GM10248 (cell line): ENCODE measurements at regions of chr9 and their contacts with region 1.

Region 1: GRCh38 chr9:133184962-133185361 is 21.2 kb upstream of the GBGT1 start:
- DNase-seq: peak; percentile 39
- CTCF ChIP-seq: peak; percentile 30

Region 2: DNA sequence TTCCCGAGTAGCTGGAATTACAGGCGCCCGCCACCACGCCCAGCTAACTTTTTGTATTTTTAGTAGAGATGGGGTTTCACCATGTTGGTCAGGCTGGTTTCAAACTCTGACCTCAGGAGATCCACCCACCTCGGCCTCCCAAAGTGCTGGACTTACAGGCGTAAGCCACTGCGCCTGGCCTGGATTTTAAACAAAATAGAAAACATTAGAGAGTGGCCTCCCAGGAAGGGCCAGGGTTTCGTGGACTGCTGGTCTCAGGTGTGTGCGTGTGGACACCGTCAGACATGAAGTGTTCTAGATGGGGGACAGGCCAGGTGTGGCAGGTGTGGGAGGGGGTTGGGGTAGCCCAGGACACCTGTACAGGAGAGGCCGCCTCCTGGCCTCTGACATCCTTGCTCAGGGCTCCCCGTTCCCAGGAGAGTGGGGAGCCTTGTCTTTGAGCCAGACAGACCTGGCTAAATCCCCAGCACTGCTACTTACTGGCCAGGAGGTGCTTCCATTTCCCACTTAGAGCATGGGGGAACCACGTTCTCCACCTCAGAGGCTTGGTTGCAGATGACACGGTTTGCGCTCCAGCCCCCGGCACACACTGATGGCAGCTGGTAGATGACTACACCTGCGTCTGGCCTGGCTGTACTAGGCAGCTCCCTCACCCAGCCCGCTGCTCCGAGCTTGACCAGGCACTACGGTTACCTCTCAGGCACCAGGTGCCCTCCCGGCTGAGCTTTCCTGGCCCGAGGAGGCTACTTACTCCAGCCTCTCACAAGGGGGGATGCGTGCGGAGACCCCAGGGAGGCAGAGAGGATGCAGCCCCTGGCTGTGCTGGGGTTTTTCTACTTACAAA is 14.0 kb before region 1 on chr9:
- CTCF ChIA-PET with region 1: interaction called, 81 read pairs
- POLR2A ChIA-PET with region 1: no interaction called
- DNase-seq: peak; percentile 19
- CTCF ChIP-seq: no peak

Region 3: DNA sequence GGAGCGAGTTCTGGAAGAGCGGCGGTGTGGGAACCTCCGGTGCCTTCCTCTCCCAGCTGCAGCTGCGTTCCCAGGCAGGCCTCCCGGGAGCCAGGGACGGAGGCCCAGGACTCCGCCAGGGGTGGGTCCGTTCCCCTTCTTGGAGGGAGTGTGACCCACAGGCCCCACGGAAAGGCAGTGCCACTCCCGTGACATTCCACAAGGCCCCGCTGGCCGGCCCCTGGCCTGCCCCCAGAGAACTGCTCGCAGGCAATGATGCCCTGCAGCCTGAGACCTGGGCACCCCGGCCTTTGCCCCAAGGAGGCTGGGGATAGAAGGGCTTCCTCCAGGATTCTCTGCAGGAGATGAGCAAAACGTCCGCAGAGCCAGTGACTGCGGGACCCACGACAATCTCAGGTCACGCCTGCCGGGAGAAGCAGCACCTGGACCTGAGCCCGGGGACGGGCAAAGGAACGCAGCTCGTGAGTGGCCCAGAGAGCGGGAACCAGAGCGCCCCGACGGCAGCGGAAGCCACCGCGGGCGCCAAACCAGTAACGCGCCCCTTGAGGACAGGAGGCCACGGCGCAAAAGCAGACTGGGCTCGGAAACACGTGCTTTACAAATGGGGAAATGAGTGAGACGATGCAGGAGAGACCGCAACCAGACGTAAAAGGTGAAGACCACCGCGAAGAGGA is 14.8 kb after region 1 on chr9:
- CTCF ChIA-PET with region 1: interaction called, 13 read pairs
- POLR2A ChIA-PET with region 1: no interaction called
- DNase-seq: no peak
- CTCF ChIP-seq: no peak

Region 4: GRCh38 chr9:133238851-133239532 is 54.0 kb after region 1 on chr9:
- CTCF ChIA-PET with region 1: interaction called, 16 read pairs
- POLR2A ChIA-PET with region 1: no interaction called
- DNase-seq: peak; percentile 82
- CTCF ChIP-seq: peak; percentile 52

Region 5: GRCh38 chr9:133334161-133334560 is 149.2 kb after region 1 on chr9:
- CTCF ChIA-PET with region 1: interaction called, 14 read pairs
- POLR2A ChIA-PET with region 1: no interaction called
- DNase-seq: no peak
- CTCF ChIP-seq: no peak

Region 6: DNA sequence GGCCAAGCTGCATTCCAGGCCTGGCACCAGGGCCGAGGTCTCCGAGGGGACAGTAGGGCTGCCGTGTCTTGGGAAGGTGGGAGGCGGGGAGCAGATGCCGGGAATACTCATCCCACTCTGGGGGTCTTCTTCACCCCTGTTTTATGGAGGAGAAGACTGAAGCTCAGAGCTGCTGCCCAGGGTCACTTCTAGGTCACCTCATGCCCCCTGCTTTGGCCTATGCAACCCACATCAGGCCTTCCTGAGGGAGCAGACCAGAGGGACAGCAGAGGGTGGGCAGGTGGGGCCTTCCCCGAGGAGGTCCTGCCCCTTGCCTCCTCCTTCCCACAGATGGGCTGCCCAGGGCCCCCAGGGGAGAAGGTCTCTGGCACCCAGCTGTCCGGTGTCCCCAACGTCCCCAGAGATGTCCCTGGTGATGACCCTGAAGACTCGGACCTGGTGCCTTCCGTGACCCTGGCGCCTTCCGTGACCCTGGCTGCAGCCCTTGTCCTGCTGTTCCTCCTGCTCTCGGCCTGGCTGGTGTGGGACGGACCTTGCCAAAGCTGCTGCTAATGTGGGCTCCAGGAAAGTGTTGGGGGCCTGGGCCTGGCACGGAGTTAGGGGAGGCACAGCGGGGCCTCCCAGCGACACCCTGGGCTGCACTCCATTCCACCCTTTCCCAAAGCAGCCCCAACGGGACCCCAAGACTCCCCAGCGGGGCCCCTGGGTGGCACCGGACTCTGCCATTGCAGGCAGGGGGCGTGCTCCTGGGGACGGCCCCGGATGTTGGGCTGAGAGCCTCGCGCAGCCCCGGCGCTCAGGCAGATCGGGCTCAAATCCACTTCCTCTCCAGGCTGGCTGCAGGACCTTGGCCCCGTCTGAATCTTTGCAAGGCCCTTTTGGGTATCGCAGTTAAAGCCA is 300.6 kb after region 1 on chr9:
- CTCF ChIA-PET with region 1: interaction called, 30 read pairs
- POLR2A ChIA-PET with region 1: no interaction called
- DNase-seq: peak; percentile 69
- CTCF ChIP-seq: peak; percentile 15